CD8-positive, alpha-beta T cell (primary cell): ENCODE measurements at regions of chr18 and their contacts with region 1.

Region 1: DNA sequence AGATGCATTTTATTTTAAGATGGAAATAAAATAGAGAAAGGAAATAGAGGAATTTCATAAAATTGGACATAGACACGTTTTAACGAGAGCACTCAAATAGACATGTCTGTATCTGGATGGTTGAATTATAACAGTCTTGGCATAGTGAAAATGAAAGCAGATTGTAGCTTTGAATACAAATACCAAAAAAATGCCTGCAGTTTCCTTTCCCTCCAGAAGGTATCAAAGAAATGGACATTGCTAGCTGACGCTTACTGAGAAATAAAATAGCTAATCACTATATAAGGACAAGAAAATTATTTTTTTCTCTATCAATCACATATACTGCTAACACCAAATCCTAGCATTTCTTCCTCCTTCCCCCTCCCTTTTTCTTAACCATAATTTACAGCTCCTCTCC is 11.4 kb upstream of the MAPRE2 start:
- DNase-seq: peak in 2 of 9 experiments; percentile 58 to 76
- ATAC-seq: peak; percentile 60
- H3K4me3 ChIP-seq: peak overlapping the region; percentile 48 to 52
- H3K4me3 Mint-ChIP-seq: peak overlapping the region; percentile 76
- H3K27ac ChIP-seq: peak overlapping the region; percentile 84 to 92
- H3K27ac Mint-ChIP-seq: peak overlapping the region; percentile 95
- H3K4me1 ChIP-seq: peaks cover 56% of the 10 kb centered on the region
- H3K4me1 Mint-ChIP-seq: peaks cover 68% of the 10 kb centered on the region
- H3K27me3 ChIP-seq: no peaks in the 10 kb centered on the region
- H3K27me3 Mint-ChIP-seq: no peaks in the 10 kb centered on the region
- CTCF ChIP-seq: peak; percentile 7

Region 2: GRCh38 chr18:34729264-34729663 is 300.5 kb before region 1 on chr18:
- CTCF ChIA-PET with region 1: no interaction called
- POLR2A ChIA-PET with region 1: no interaction called
- intact Hi-C with region 1: no loop called
- DNase-seq: peak in 2 of 9 experiments; percentile 3 to 11
- ATAC-seq: no peak
- H3K4me3 ChIP-seq: no peak overlapping the region
- H3K4me3 Mint-ChIP-seq: no peak overlapping the region
- H3K27ac ChIP-seq: no peak overlapping the region
- H3K27ac Mint-ChIP-seq: no peak overlapping the region
- H3K4me1 ChIP-seq: no peaks in the 10 kb centered on the region
- H3K4me1 Mint-ChIP-seq: peaks cover 2% of the 10 kb centered on the region
- H3K27me3 ChIP-seq: no peaks in the 10 kb centered on the region
- H3K27me3 Mint-ChIP-seq: peaks cover 3% of the 10 kb centered on the region
- CTCF ChIP-seq: peak; percentile 28

Region 3: GRCh38 chr18:34760444-34760843 is 269.3 kb before region 1 on chr18:
- CTCF ChIA-PET with region 1: no interaction called
- POLR2A ChIA-PET with region 1: no interaction called
- intact Hi-C with region 1: no loop called
- DNase-seq: no peak
- ATAC-seq: no peak
- H3K4me3 ChIP-seq: no peak overlapping the region
- H3K4me3 Mint-ChIP-seq: no peak overlapping the region
- H3K27ac ChIP-seq: no peak overlapping the region
- H3K27ac Mint-ChIP-seq: no peak overlapping the region
- H3K4me1 ChIP-seq: no peaks in the 10 kb centered on the region
- H3K4me1 Mint-ChIP-seq: no peaks in the 10 kb centered on the region
- H3K27me3 ChIP-seq: no peaks in the 10 kb centered on the region
- H3K27me3 Mint-ChIP-seq: peaks cover 14% of the 10 kb centered on the region
- CTCF ChIP-seq: no peak

Region 4: GRCh38 chr18:35040988-35041814 is 11.4 kb after region 1 on chr18 and contains the start of gene MAPRE2:
- CTCF ChIA-PET with region 1: interaction called, 71 read pairs
- POLR2A ChIA-PET with region 1: interaction called, 65 read pairs
- intact Hi-C with region 1: loop called (anchors 1 kb)
- DNase-seq: peak; percentile 99 to 100 (median 100)
- ATAC-seq: peak; percentile 79
- H3K4me3 ChIP-seq: peak within 1 kb of the TSS; percentile 87 to 90
- H3K4me3 Mint-ChIP-seq: peak within 1 kb of the TSS; percentile 98
- H3K27ac ChIP-seq: peak within 1 kb of the TSS; percentile 93 to 96
- H3K27ac Mint-ChIP-seq: peak within 1 kb of the TSS; percentile 96
- H3K4me1 ChIP-seq: peaks cover 42% of the 10 kb centered on the region
- H3K4me1 Mint-ChIP-seq: peaks cover 44% of the 10 kb centered on the region
- H3K27me3 ChIP-seq: no peaks in the 10 kb centered on the region
- H3K27me3 Mint-ChIP-seq: no peaks in the 10 kb centered on the region
- CTCF ChIP-seq: no peak
- total RNA-seq, gene MAPRE2: 137 to 145 TPM

Region 5: GRCh38 chr18:35122586-35123224 is 92.9 kb after region 1 on chr18:
- CTCF ChIA-PET with region 1: interaction called, 8 read pairs
- POLR2A ChIA-PET with region 1: no interaction called
- intact Hi-C with region 1: loop called in 1 of 2 experiments (anchors 5 kb)
- DNase-seq: peak in 4 of 9 experiments; percentile 21 to 57 (median 38)
- ATAC-seq: peak; percentile 78
- H3K4me3 ChIP-seq: no peak overlapping the region
- H3K4me3 Mint-ChIP-seq: peak overlapping the region; percentile 60
- H3K27ac ChIP-seq: no peak overlapping the region
- H3K27ac Mint-ChIP-seq: peak overlapping the region; percentile 84
- H3K4me1 ChIP-seq: peaks cover 33% of the 10 kb centered on the region
- H3K4me1 Mint-ChIP-seq: peaks cover 62% of the 10 kb centered on the region
- H3K27me3 ChIP-seq: no peaks in the 10 kb centered on the region
- H3K27me3 Mint-ChIP-seq: no peaks in the 10 kb centered on the region
- CTCF ChIP-seq: peak; percentile 29

Region 6: DNA sequence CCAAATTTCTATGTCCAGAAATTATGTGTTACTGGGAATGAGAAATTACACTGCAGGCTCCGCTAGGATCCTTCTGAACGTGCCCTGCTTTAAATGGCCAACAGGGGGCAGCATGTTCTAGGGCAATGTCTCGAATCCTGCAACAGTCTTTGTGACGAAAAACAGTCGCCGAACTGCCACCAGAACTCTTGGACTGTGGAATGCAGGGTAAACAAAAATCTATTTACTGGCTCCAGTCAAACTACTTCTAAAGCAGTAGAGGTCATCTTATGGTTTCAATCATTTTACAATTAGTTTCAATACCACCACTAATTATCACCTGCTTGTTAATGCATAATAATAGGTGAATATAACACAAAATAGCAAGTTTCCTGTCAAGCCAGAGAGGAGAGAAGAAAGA is 201.3 kb after region 1 on chr18:
- CTCF ChIA-PET with region 1: interaction called, 9 read pairs
- POLR2A ChIA-PET with region 1: no interaction called
- intact Hi-C with region 1: loop called (anchors 1 to 5 kb)
- DNase-seq: peak; percentile 59 to 89 (median 80)
- ATAC-seq: peak; percentile 98
- H3K4me3 ChIP-seq: no peak overlapping the region
- H3K4me3 Mint-ChIP-seq: peak overlapping the region; percentile 50
- H3K27ac ChIP-seq: no peak overlapping the region
- H3K27ac Mint-ChIP-seq: no peak overlapping the region
- H3K4me1 ChIP-seq: no peaks in the 10 kb centered on the region
- H3K4me1 Mint-ChIP-seq: peaks cover 3% of the 10 kb centered on the region
- H3K27me3 ChIP-seq: peaks cover 0 to 3% of the 10 kb centered on the region in 2 experiments
- H3K27me3 Mint-ChIP-seq: no peaks in the 10 kb centered on the region
- CTCF ChIP-seq: peak; percentile 92

Region 7: GRCh38 chr18:35343936-35344735 is 314.4 kb after region 1 on chr18 and contains the start of gene ZNF24:
- CTCF ChIA-PET with region 1: no interaction called
- POLR2A ChIA-PET with region 1: no interaction called
- intact Hi-C with region 1: loop called in 1 of 2 experiments (anchors 5 kb)
- DNase-seq: peak; percentile 84 to 95 (median 92)
- ATAC-seq: peak; percentile 90
- H3K4me3 ChIP-seq: peak within 1 kb of the TSS; percentile 96 to 97
- H3K4me3 Mint-ChIP-seq: peak within 1 kb of the TSS; percentile 94
- H3K27ac ChIP-seq: peak within 1 kb of the TSS; percentile 98 to 99
- H3K27ac Mint-ChIP-seq: peak within 1 kb of the TSS; percentile 97
- H3K4me1 ChIP-seq: peaks cover 45% of the 10 kb centered on the region
- H3K4me1 Mint-ChIP-seq: peaks cover 48% of the 10 kb centered on the region
- H3K27me3 ChIP-seq: no peaks in the 10 kb centered on the region
- H3K27me3 Mint-ChIP-seq: no peaks in the 10 kb centered on the region
- CTCF ChIP-seq: no peak
- total RNA-seq, gene ZNF24: 55.3 to 57.0 TPM